ENCODE measurements at regions of chr11 and their contacts with region 1.

Region 1: DNA sequence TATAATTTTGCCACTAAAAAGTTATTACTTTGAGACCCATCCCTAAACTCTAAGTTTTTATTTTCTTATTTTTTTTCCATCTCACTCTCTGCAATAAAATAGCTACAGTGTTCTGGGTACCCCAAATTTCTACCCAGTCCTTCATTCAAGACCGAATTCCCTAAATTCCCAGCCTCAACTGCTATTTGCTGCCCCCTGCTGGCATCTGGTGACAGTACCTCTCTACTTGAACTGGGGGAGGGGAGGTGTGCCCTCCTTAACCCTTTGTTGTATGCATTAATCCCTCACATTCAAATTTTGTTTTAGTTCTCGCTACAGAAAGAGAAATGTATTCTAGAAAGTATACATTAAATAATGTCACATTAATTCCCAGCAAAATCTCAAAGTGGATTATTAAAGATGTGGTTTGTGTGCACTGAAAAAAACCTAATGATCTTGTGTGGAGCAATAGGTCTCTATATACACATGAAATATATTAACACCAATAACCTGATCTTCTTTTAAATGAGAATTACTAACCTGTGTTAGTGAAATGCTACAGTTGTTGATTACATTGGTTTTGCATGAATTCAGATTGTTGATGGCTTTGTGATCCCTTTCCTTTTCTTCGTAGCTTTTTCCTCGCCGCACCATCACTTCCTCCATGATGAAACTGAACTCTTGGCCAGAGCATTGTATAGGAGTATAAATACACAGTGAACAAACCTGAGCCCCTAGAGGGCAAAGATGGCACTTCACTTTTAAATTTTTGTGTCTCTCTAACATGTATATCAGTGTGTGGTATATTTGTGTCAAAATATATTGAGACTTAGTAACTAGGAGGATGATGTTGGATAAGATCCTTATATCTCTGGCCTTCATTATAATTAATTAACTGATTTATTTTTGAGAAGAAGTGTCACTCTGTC is 590.0 kb downstream of the METTL15 start:
- DNase-seq: peak; percentile 60
- H3K4me3 ChIP-seq: no peak overlapping the region
- H3K27ac ChIP-seq: no peak overlapping the region
- H3K4me1 ChIP-seq: peaks cover 21% of the 10 kb centered on the region
- H3K27me3 ChIP-seq: no peaks in the 10 kb centered on the region
- CTCF ChIP-seq: peak; percentile 73 to 80
- POLR2A ChIP-seq: no peak

Region 2: GRCh38 chr11:27847496-27847895 is 850.7 kb before region 1 on chr11:
- CTCF ChIA-PET with region 1: no interaction called
- POLR2A ChIA-PET with region 1: no interaction called
- dilution Hi-C with region 1: no loop called
- intact Hi-C with region 1: loop called (anchors 10 kb)
- DNase-seq: no peak
- H3K4me3 ChIP-seq: no peak overlapping the region
- H3K27ac ChIP-seq: no peak overlapping the region
- H3K4me1 ChIP-seq: no peaks in the 10 kb centered on the region
- H3K27me3 ChIP-seq: peaks cover 7 to 10% of the 10 kb centered on the region in 2 experiments
- CTCF ChIP-seq: no peak
- POLR2A ChIP-seq: no peak

Measured in endothelial cell of umbilical vein (primary cell).